CD4-positive, alpha-beta memory T cell (primary cell): ENCODE measurements at regions of chr17 and their contacts with region 1.

Region 1: GRCh38 chr17:7862692-7863437 is 5.1 kb downstream of the CYB5D1 start:
- DNase-seq: peak; percentile 35 to 58 (median 41)
- H3K4me3 ChIP-seq: no peak overlapping the region
- H3K4me3 Mint-ChIP-seq: no peak overlapping the region
- H3K27ac ChIP-seq: no peak overlapping the region
- H3K27ac Mint-ChIP-seq: peak overlapping the region in 5 of 7 donors; percentile 11 to 80 (median 15)
- H3K4me1 ChIP-seq: peaks cover 27% of the 10 kb centered on the region
- H3K4me1 Mint-ChIP-seq: peaks cover 18 to 31% (median 22%) of the 10 kb centered on the region in 4 donors
- H3K27me3 ChIP-seq: no peaks in the 10 kb centered on the region
- H3K27me3 Mint-ChIP-seq: no peaks in the 10 kb centered on the region

Region 2: GRCh38 chr17:7767405-7768021 is 95.4 kb before region 1 on chr17:
- CTCF ChIA-PET with region 1: no interaction called
- POLR2A ChIA-PET with region 1: no interaction called
- intact Hi-C with region 1: no loop called
- DNase-seq: no peak
- H3K4me3 ChIP-seq: no peak overlapping the region
- H3K4me3 Mint-ChIP-seq: no peak overlapping the region
- H3K27ac ChIP-seq: no peak overlapping the region
- H3K27ac Mint-ChIP-seq: no peak overlapping the region
- H3K4me1 ChIP-seq: no peaks in the 10 kb centered on the region
- H3K4me1 Mint-ChIP-seq: no peaks in the 10 kb centered on the region
- H3K27me3 ChIP-seq: no peaks in the 10 kb centered on the region
- H3K27me3 Mint-ChIP-seq: peaks cover 18 to 21% of the 10 kb centered on the region in 2 donors

Region 3: GRCh38 chr17:7873051-7873450 is 10.2 kb after region 1 on chr17:
- CTCF ChIA-PET with region 1: interaction called, 18 read pairs
- POLR2A ChIA-PET with region 1: interaction called, 11 read pairs
- intact Hi-C with region 1: no loop called
- DNase-seq: no peak
- H3K4me3 ChIP-seq: no peak overlapping the region
- H3K4me3 Mint-ChIP-seq: no peak overlapping the region
- H3K27ac ChIP-seq: no peak overlapping the region
- H3K27ac Mint-ChIP-seq: peak overlapping the region in 3 of 7 donors; percentile 37 to 86 (median 61)
- H3K4me1 ChIP-seq: peaks cover 15% of the 10 kb centered on the region
- H3K4me1 Mint-ChIP-seq: peaks cover 11 to 36% (median 25%) of the 10 kb centered on the region in 4 donors
- H3K27me3 ChIP-seq: no peaks in the 10 kb centered on the region
- H3K27me3 Mint-ChIP-seq: no peaks in the 10 kb centered on the region

Region 4: DNA sequence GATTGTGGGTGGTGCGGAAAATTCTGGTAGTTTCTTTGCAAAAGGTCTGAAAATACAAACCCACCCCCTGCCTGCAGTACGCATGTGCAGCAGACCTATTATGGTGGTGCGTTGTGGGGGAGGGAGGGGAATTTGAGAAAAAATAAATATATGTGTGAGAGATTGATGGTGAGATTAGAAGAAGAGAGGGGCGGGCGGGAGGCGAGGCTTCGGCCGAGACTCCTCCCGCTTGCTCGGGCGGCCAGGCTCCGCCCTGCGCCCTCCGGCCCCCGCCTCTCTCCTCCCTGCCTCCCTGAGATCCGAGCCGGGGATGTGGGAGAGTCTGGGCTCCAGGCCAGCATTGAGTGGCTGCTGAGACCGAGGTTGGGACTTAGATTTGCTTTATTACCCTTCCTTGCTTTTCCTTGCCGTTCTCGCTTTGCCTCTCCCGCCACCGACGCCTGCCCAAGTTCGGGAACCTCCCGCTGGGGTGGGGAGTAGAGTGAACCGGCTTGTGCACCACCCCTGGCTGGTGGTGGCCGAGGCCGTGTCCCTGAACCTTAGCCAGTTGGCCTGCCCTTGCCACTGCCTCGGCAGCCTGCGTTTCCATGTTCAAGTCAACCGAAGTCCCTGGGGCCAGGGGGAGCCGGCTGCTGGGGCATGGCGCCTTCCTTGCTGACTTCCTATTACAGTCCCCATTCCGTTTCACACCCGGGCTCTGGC is 24.8 kb after region 1 on chr17:
- CTCF ChIA-PET with region 1: interaction called, 13 read pairs
- POLR2A ChIA-PET with region 1: interaction called, 19 read pairs
- intact Hi-C with region 1: loop called (anchors 1 kb)
- DNase-seq: peak; percentile 89 to 95 (median 92)
- H3K4me3 ChIP-seq: peak overlapping the region; percentile 86 to 96
- H3K4me3 Mint-ChIP-seq: no peak overlapping the region
- H3K27ac ChIP-seq: peak overlapping the region; percentile 65
- H3K27ac Mint-ChIP-seq: no peak overlapping the region
- H3K4me1 ChIP-seq: peaks cover 46% of the 10 kb centered on the region
- H3K4me1 Mint-ChIP-seq: peaks cover 10 to 16% (median 12%) of the 10 kb centered on the region in 4 donors
- H3K27me3 ChIP-seq: no peaks in the 10 kb centered on the region
- H3K27me3 Mint-ChIP-seq: no peaks in the 10 kb centered on the region

Region 5: DNA sequence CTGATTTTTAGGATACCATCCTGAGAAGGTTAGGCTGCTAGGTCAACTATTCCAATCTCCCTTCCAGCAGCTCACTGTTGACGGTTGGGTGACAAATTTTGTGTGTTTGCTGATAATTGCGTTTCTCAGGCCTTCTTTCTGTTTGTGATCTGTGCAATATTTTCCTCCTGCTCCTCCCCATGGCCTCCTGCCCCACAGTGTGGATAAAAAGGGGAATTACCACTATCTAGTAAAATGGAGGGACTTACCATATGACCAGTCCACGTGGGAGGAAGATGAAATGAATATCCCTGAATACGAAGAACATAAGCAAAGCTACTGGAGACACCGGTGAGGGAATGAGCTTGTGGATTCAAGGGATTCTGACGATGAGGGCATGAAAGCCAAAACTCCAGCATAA is 34.9 kb after region 1 on chr17:
- CTCF ChIA-PET with region 1: interaction called, 55 read pairs
- POLR2A ChIA-PET with region 1: interaction called, 7 read pairs
- intact Hi-C with region 1: no loop called
- DNase-seq: peak; percentile 29 to 43 (median 36)
- H3K4me3 ChIP-seq: no peak overlapping the region
- H3K4me3 Mint-ChIP-seq: no peak overlapping the region
- H3K27ac ChIP-seq: no peak overlapping the region
- H3K27ac Mint-ChIP-seq: peak overlapping the region; percentile 11 to 82 (median 38)
- H3K4me1 ChIP-seq: no peaks in the 10 kb centered on the region
- H3K4me1 Mint-ChIP-seq: peaks cover 7 to 27% (median 11%) of the 10 kb centered on the region in 4 donors
- H3K27me3 ChIP-seq: no peaks in the 10 kb centered on the region
- H3K27me3 Mint-ChIP-seq: no peaks in the 10 kb centered on the region